Activated B cell treated with CpG ODN at 0.5 μM for 24 hours (primary cell): ENCODE measurements at regions of chr19 and their contacts with region 1.

Region 1: DNA sequence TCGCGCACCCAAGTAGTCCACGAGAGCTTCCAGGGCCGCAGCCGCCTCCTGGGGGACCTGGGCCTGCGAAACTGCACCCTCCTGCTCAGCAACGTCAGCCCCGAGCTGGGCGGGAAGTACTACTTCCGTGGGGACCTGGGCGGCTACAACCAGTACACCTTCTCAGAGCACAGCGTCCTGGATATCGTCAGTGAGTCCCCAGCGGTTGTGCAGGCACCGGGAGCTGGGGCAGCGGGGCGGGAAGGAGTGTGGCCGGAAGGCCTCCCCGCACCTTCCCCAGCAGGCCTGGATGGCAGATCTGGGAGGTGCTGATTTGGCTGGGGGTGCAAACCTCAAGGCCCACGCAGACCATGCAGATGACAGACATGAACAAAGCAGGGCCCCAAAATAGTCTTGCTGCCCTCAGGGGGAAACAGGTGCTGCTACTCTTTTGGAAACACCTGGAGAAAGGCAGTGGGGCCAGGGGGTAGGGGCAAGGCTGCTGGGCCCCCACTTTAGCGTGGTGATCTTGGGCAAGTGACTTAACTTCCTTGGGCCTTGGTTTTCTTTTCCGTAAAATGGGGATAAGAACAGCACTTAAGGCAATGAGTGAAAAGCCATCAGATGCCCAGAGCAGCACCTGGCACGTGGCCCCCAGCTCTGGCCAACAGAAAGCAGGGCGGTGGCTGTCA is 4.0 kb downstream of the MAG start:
- DNase-seq: peak; percentile 50
- ATAC-seq: peak; percentile 80
- H3K4me3 Mint-ChIP-seq: peak overlapping the region; percentile 12
- H3K27ac Mint-ChIP-seq: peak overlapping the region; percentile 48
- H3K4me1 Mint-ChIP-seq: peaks cover 24% of the 10 kb centered on the region
- H3K27me3 Mint-ChIP-seq: no peaks in the 10 kb centered on the region
- CTCF ChIP-seq: no peak

Region 2: GRCh38 chr19:35279985-35280821 is 15.7 kb before region 1 on chr19:
- CTCF ChIA-PET with region 1: no interaction called
- POLR2A ChIA-PET with region 1: interaction called, 3 read pairs
- intact Hi-C with region 1: loop called (anchors 2 kb)
- DNase-seq: no peak
- ATAC-seq: peak; percentile 33
- H3K4me3 Mint-ChIP-seq: no peak overlapping the region
- H3K27ac Mint-ChIP-seq: peak overlapping the region; percentile 75
- H3K4me1 Mint-ChIP-seq: peaks cover 45% of the 10 kb centered on the region
- H3K27me3 Mint-ChIP-seq: no peaks in the 10 kb centered on the region
- CTCF ChIP-seq: no peak